ENCODE measurements at regions of chrX and their contacts with region 1.

Region 1: GRCh38 chrX:102515975-102516941 is at the start of gene TMSB15A:
- DNase-seq: peak; percentile 8 to 57 (median 42)
- ATAC-seq: peak; percentile 90
- H3K4me3 ChIP-seq: peak within 1 kb of the TSS; percentile 43
- H3K4me3 Mint-ChIP-seq: peak within 1 kb of the TSS; percentile 69 to 87 (median 84)
- H3K27ac ChIP-seq: no peak within 1 kb of the TSS
- H3K27ac Mint-ChIP-seq: no peak within 1 kb of the TSS
- H3K4me1 ChIP-seq: no peaks in the 10 kb centered on the region
- H3K4me1 Mint-ChIP-seq: peaks cover 0 to 11% (median 0%) of the 10 kb centered on the region in 7 donors
- H3K27me3 ChIP-seq: no peaks in the 10 kb centered on the region
- H3K27me3 Mint-ChIP-seq: peaks cover 30 to 48% (median 39%) of the 10 kb centered on the region in 5 donors
- total RNA-seq, gene TMSB15A: 0.46 TPM in 1 of 5 experiments, not detected in the others

Region 2: DNA sequence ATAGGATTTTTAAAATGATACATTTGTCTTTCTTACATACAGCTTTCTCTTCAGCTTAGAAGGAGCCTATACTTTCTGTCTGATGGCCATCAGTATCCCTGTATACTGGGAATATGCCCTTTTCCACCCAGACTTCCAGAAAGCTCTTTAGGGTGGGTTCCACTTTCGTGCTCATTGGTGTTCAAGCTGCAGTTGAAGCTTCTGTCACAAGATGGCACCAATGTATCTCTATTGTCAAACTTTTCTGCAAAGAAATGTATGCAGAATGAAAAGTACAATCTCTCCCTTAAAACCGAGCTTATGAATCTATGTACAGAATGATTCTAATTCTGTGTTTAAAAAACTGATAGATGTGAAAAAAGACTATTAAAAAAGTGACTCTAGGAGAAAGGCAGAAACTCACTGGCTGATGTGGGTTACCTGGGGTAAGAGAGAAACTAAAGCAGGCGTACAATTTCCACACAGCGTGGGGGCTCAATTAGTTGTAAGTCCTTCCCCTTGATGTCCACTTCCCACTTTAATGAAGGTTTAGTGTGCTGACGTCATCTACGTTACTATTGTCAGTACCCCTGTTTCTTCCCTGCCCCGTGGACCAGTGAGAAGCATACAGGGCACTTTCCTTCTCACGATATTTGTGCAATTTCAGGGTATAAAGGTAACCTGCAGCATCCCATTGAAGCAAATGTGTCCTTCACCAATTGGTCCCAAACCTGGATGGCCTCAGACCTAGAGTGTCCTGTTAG is 448.1 kb before region 1 on chrX:
- CTCF ChIA-PET with region 1: no interaction called
- POLR2A ChIA-PET with region 1: no interaction called
- intact Hi-C with region 1: loop called in 1 of 2 experiments (anchors 2 kb)
- DNase-seq: peak in 5 of 9 donors; percentile 4 to 30 (median 17)
- ATAC-seq: no peak
- H3K4me3 ChIP-seq: no peak overlapping the region
- H3K4me3 Mint-ChIP-seq: no peak overlapping the region
- H3K27ac ChIP-seq: no peak overlapping the region
- H3K27ac Mint-ChIP-seq: no peak overlapping the region
- H3K4me1 ChIP-seq: no peaks in the 10 kb centered on the region
- H3K4me1 Mint-ChIP-seq: no peaks in the 10 kb centered on the region
- H3K27me3 ChIP-seq: no peaks in the 10 kb centered on the region
- H3K27me3 Mint-ChIP-seq: peaks cover 0 to 18% (median 9%) of the 10 kb centered on the region in 5 donors

Region 3: GRCh38 chrX:102652031-102652688 is 135.9 kb after region 1 on chrX:
- CTCF ChIA-PET with region 1: no interaction called
- POLR2A ChIA-PET with region 1: no interaction called
- intact Hi-C with region 1: loop called in 1 of 2 experiments (anchors 5 kb)
- DNase-seq: peak in 8 of 9 donors; percentile 19 to 83 (median 78)
- ATAC-seq: peak; percentile 89
- H3K4me3 ChIP-seq: peak overlapping the region; percentile 83
- H3K4me3 Mint-ChIP-seq: peak overlapping the region; percentile 83 to 100 (median 94)
- H3K27ac ChIP-seq: peak overlapping the region; percentile 88
- H3K27ac Mint-ChIP-seq: peak overlapping the region; percentile 69 to 99 (median 95)
- H3K4me1 ChIP-seq: peaks cover 4 to 5% of the 10 kb centered on the region in 2 donors
- H3K4me1 Mint-ChIP-seq: peaks cover 13 to 48% (median 35%) of the 10 kb centered on the region in 7 donors
- H3K27me3 ChIP-seq: no peaks in the 10 kb centered on the region
- H3K27me3 Mint-ChIP-seq: peaks cover 0 to 9% (median 0%) of the 10 kb centered on the region in 5 donors